Colonic mucosa (tissue), 4 donors: ENCODE measurements at regions of chr5 and their contacts with region 1.

Region 1: DNA sequence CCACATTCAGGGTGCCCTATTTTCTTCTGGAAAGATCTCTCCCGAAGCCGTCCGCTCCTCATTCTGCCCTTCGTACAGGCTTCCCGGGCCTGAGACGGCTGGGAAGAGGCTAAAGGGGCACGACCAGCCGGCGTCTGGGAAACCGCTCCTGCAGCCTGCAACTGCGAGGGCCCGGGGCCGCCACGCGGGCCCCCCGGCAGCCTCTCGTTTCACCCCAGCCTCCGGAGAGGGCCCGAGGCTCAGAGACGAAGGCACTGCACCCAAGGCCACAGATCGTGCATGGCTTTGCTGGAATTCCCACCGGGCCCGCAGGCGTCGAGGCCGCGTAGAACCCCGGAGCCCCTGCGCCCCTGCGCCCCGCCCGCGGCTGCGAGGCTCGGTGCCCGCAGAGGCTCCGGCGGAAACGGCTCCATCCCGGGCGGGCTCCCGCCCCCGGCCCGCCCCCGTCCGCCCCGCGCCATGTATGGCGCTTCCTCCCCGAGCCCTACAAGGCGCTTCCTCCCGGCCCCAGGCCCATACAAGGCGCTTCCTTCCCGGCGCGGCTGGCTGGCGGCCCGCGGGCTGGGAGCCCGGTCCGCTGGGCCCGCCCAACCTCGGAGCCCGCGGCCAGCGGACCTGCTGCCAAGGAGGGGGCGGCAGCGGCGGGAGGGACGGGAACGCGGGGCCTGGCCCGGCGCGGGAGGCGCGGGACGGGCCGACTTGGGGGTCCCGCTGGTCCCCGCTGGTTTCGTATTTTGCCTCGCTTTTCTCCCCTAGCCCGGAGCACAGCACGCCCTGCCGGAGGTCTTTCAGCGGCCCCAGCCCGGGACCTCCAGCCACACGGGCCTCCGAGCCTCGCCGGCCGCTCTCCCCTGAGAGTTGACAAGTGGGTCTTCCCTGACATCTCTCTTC is 26.6 kb downstream of the EGR1 start:
- DNase-seq: peak; percentile 89
- H3K4me3 ChIP-seq: peak overlapping the region; percentile 53
- H3K27ac ChIP-seq: no peak overlapping the region
- H3K4me1 ChIP-seq: no peaks in the 10 kb centered on the region
- H3K27me3 ChIP-seq: peaks cover 17% of the 10 kb centered on the region
- CTCF ChIP-seq: no peak

Region 2: DNA sequence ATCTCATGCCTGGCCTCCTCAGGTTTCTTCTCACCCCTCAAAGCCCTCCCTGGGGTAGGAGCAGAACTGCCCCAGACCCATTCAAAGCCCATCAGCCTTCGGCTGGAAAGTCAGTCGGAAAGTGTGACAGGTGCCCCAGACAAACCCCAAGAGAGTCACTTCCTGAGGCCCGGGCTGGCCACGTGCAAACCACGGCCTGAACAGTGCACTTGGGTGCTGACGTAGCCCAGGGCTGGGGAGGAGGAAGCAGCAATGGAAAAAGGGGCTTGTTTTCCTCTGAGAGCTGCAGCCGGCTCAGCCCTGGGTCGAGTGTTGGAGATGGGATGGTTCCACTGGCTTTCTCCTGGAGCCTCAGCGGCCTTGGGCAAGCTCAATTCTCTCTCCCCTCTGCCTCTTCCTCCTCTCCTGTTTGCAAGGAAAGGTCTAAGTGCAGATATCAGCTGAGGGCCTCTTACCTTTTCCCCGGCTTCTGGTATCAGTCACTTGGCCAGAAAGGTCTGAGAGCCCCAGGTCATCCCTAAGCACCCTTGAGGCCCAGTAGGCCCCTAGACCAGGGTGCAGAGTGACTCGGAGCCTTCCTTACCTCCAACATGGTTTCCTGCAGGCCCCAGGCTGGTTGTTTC is 32.5 kb before region 1 on chr5:
- intact Hi-C with region 1: loop called (anchors 5 kb)
- DNase-seq: peak; percentile 46
- H3K4me3 ChIP-seq: no peak overlapping the region
- H3K27ac ChIP-seq: no peak overlapping the region
- H3K4me1 ChIP-seq: peaks cover 3% of the 10 kb centered on the region
- H3K27me3 ChIP-seq: no peaks in the 10 kb centered on the region
- CTCF ChIP-seq: no peak